ENCODE measurements at regions of chr3 and their contacts with region 1.

Region 1: GRCh38 chr3:157081681-157082210 is 78.2 kb downstream of the CCNL1 start:
- DNase-seq: peak; percentile 86 to 94 (median 91)
- ATAC-seq: peak; percentile 71 to 91 (median 86)
- H3K4me3 ChIP-seq: no peak overlapping the region
- H3K27ac ChIP-seq: peak overlapping the region in 5 of 12 donors; percentile 4 to 52 (median 33)
- H3K4me1 ChIP-seq: peaks cover 0 to 41% (median 15%) of the 10 kb centered on the region in 12 donors
- H3K27me3 ChIP-seq: no peaks in the 10 kb centered on the region
- CTCF ChIP-seq: peak; percentile 93 to 98 (median 96)
- POLR2A ChIP-seq: no peak

Region 2: DNA sequence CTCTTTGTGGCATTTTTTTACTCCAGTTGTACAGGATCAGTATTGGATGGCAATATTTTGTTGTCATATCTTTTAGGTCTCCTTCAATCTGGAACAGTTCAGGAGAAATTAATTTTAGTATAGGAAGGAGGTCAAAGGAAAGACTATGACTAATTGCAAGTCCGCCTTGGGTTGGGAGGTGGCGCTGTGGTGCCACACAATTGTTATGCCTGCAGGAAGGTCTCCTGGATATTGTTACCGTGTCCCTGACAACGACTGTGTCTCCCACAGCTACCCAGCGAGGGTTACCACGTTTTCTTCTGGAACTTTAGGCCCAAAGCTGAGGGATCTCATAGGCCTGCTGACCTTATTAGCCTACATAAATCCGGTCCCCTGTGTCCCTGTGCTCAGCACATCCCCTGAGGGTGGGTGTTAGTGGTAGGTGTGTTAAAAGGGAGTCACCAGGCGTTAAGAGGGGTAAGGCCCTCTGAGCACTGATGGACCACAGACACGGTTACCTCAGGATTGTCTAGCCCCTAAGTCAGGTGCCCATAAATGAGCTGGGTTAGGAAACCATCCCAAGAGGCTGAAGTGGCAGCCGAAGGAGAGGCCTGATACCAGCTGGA is 929.8 kb before region 1 on chr3:
- intact Hi-C with region 1: loop called in 8 of 10 experiments (anchors 2 to 5 kb)
- DNase-seq: peak; percentile 52 to 76 (median 69)
- ATAC-seq: peak; percentile 40 to 87 (median 79)
- H3K4me3 ChIP-seq: no peak overlapping the region
- H3K27ac ChIP-seq: peak overlapping the region in 1 of 12 donors; percentile 73
- H3K4me1 ChIP-seq: peaks cover 0 to 38% (median 17%) of the 10 kb centered on the region in 12 donors
- H3K27me3 ChIP-seq: no peaks in the 10 kb centered on the region
- CTCF ChIP-seq: peak; percentile 53 to 79 (median 74)
- POLR2A ChIP-seq: no peak

Region 3: DNA sequence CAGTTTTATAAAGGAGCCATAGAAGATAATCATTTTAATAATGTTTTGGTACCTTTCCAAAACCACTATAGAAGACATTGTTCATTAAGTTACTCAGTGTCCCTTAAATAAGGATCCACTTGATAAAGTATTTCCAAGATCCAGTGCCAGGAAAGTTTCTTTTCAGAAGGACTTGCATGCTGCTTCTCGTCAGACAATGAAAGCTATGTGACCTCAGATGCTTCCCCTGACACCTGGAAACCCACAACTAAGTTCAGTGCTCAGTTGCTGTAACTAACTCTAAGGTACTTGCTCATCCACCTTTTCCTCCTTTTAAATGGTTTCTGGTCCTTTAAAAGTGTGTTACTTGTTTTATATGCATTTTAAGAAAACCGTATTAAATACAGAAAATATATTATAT is 534.1 kb before region 1 on chr3:
- intact Hi-C with region 1: loop called in 7 of 10 experiments (anchors 5 kb)
- DNase-seq: peak in 1 of 5 donors; percentile 45
- ATAC-seq: peak; percentile 49 to 78 (median 61)
- H3K4me3 ChIP-seq: no peak overlapping the region
- H3K27ac ChIP-seq: peak overlapping the region; percentile 35 to 80 (median 58)
- H3K4me1 ChIP-seq: peaks cover 8 to 99% (median 74%) of the 10 kb centered on the region in 12 donors
- H3K27me3 ChIP-seq: no peaks in the 10 kb centered on the region
- CTCF ChIP-seq: no peak
- POLR2A ChIP-seq: no peak

Region 4: GRCh38 chr3:156674046-156674910 is 407.5 kb before region 1 on chr3 and contains the start of gene TIPARP:
- intact Hi-C with region 1: loop called in 8 of 10 experiments (anchors 1 to 5 kb)
- DNase-seq: peak; percentile 99 to 100 (median 100)
- ATAC-seq: peak; percentile 92 to 98 (median 96)
- H3K4me3 ChIP-seq: peak within 1 kb of the TSS; percentile 66 to 97 (median 80)
- H3K27ac ChIP-seq: peak within 1 kb of the TSS; percentile 88 to 99 (median 96)
- H3K4me1 ChIP-seq: peaks cover 0 to 51% (median 29%) of the 10 kb centered on the region in 12 donors
- H3K27me3 ChIP-seq: no peaks in the 10 kb centered on the region
- CTCF ChIP-seq: peak; percentile 55 to 88 (median 77)
- POLR2A ChIP-seq: peak; percentile 81 to 99
- total RNA-seq, gene TIPARP: 17.8 to 46.8 (median 33.8) TPM

Region 5: GRCh38 chr3:156816800-156817645 is 264.7 kb before region 1 on chr3:
- intact Hi-C with region 1: loop called in 3 of 10 experiments (anchors 5 to 10 kb)
- DNase-seq: peak; percentile 82 to 93 (median 88)
- ATAC-seq: peak; percentile 83 to 94 (median 90)
- H3K4me3 ChIP-seq: peak overlapping the region; percentile 40 to 76 (median 66)
- H3K27ac ChIP-seq: peak overlapping the region; percentile 51 to 93 (median 84)
- H3K4me1 ChIP-seq: peaks cover 0 to 32% (median 12%) of the 10 kb centered on the region in 12 donors
- H3K27me3 ChIP-seq: no peaks in the 10 kb centered on the region
- CTCF ChIP-seq: peak in 3 of 12 donors; percentile 23 to 31 (median 25)
- POLR2A ChIP-seq: peak in 1 of 2 donors; percentile 58

Region 6: DNA sequence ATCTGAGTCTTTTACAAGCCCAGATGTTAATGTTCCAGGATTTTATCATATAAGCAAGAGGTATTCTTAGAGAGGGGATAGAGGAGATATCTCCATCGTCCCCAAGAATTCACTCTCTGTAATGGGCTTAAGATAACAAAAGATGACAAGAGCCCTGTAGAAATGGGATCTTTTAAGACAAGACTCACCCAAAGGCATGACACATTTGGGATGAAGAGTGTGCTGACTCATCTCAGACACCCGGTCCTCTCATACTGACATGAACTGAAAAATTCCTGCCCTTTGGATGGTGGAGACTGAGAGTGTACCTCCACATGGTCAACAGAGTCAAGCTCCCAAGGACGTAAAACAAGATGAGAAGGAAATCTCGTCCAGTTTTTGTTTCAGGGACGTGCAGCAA is 244.6 kb before region 1 on chr3:
- intact Hi-C with region 1: loop called in 1 of 10 experiments (anchors 10 kb)
- DNase-seq: no peak
- ATAC-seq: no peak
- H3K4me3 ChIP-seq: no peak overlapping the region
- H3K27ac ChIP-seq: no peak overlapping the region
- H3K4me1 ChIP-seq: no peaks in the 10 kb centered on the region
- H3K27me3 ChIP-seq: no peaks in the 10 kb centered on the region
- CTCF ChIP-seq: no peak
- POLR2A ChIP-seq: no peak

Region 7: DNA sequence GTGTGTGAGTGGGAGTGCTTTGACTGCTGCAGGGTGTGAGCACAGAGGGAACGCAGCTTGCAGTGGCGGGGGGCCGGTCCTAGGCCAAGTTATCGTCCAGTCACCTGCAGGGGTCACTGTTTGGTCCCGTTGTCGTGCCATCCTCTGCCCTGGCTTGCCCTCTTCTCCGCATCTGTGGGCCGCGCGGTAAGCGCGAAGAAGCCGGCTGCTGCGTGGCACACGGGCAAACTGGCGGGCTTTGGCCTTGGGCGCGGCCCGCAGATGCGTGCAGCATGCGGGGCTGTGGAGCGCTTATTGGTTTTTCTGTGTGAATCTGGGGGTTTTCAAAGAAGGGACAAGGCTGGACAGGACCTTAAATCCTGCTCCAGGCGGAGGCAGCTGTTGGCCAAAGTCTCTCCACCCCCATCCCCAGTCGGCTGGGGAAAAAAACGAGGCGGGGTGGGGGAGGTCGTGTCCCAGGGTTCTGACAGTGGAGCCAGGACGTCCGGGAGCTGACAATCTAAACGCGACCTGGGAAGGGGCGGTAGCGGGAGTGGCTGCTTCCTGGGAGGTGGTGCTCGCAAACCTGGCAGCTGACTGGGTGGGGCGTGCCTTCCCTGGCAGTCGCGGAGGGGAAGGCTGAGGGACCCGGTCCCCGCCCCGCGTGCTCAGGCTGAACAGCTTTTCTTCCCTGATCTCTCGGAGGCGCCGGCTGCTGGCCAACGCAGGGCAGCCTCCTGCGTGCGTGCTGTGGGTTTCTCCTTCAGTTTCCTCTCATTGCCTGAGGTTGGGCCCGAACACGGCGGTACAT is 461.2 kb after region 1 on chr3:
- intact Hi-C with region 1: no loop called
- DNase-seq: peak; percentile 47 to 84 (median 79)
- ATAC-seq: peak; percentile 52 to 91 (median 86)
- H3K4me3 ChIP-seq: peak overlapping the region; percentile 10 to 55 (median 45)
- H3K27ac ChIP-seq: peak overlapping the region in 9 of 12 donors; percentile 12 to 46 (median 23)
- H3K4me1 ChIP-seq: peaks cover 0 to 10% (median 0%) of the 10 kb centered on the region in 12 donors
- H3K27me3 ChIP-seq: peaks cover 0 to 8% (median 0%) of the 10 kb centered on the region in 9 donors
- CTCF ChIP-seq: peak in 3 of 12 donors; percentile 11 to 16 (median 12)
- POLR2A ChIP-seq: peak in 1 of 2 donors; percentile 15